ENCODE measurements at regions of chr3 and their contacts with region 1.

Region 1: DNA sequence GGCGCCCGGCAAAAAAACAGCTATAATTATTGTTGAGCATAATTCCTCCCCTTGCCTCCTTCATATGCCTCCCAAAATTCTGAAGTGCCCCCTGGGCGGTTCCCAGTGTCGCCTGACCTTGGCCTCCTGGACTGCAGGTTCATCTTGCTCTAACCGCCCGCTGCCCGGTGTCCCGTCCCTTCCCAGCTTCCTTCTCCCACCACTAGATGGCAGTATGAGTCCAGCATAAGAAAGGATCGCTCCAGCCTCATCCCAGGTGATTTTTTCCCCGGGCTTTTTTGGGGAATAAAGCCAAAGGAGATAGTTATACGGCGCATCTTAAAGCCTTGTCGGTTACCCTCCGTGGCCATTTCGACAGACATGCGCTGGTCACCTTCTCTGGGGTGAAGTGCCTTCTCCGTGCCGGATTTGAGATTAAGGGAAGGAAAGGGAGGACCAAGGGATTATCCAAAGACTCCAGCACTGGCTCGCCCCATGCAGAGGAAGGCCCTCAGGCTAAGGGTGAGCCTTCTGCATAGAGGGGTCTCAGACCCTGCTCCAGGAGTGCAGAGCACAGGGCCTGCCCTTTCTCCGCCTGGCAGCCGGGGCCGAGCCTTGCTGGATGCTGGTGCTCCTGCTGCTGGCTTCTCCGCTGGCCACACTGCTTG is 45.8 kb upstream of the TRA2B start:
- DNase-seq: peak; percentile 55
- H3K4me3 ChIP-seq: no peak overlapping the region
- H3K27ac ChIP-seq: no peak overlapping the region
- H3K4me1 ChIP-seq: peaks cover 6% of the 10 kb centered on the region
- H3K27me3 ChIP-seq: no peaks in the 10 kb centered on the region
- CTCF ChIP-seq: peak; percentile 77 to 88
- POLR2A ChIP-seq: no peak

Region 2: GRCh38 chr3:186241910-186242821 is 258.5 kb after region 1 on chr3:
- CTCF ChIA-PET with region 1: interaction called, 44 read pairs
- POLR2A ChIA-PET with region 1: no interaction called
- dilution Hi-C with region 1: no loop called
- intact Hi-C with region 1: loop called (anchors 1 kb)
- DNase-seq: peak; percentile 33
- H3K4me3 ChIP-seq: no peak overlapping the region
- H3K27ac ChIP-seq: no peak overlapping the region
- H3K4me1 ChIP-seq: no peaks in the 10 kb centered on the region
- H3K27me3 ChIP-seq: no peaks in the 10 kb centered on the region
- CTCF ChIP-seq: peak; percentile 24 to 55
- POLR2A ChIP-seq: no peak

Region 3: DNA sequence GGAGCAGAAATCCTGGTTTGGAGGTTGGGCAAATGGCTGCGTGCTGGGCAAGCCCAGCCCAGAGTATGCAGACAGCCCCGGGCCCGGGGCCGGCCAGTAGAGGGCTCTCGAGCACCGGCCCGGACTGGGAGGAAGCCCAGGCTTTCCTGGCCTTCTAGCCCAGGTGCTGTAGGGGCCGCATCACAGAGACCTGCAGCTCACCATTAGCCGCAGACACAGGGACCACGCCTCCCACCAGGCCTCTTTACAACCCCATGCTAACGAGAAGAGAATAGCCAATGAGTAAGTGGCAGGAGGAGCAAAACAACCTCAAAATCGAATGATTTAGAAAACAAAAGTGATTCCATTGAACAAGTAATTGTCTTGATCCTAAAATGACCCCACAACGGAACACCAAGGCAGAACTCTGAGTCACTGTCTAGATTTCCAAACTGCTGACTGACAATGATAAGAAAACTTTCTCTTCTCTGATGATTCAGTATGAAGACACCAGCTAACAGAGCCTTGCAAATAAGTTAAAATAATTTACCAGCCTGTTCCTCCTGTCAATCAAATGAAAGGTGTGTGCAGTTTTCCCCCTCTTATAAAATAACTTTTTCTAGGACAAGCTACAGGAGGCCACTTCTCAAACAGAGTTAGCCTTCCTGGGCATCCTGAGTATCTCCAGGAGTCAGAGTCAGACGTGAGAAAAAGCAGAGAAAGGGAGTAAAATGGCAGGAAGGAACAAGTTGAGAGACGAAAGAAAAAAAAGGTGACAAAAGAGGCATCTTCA is 276.2 kb after region 1 on chr3:
- CTCF ChIA-PET with region 1: interaction called, 22 read pairs
- POLR2A ChIA-PET with region 1: no interaction called
- dilution Hi-C with region 1: no loop called
- intact Hi-C with region 1: loop called (anchors 5 kb)
- DNase-seq: peak; percentile 58
- H3K4me3 ChIP-seq: no peak overlapping the region
- H3K27ac ChIP-seq: no peak overlapping the region
- H3K4me1 ChIP-seq: no peaks in the 10 kb centered on the region
- H3K27me3 ChIP-seq: no peaks in the 10 kb centered on the region
- CTCF ChIP-seq: peak; percentile 87 to 98
- POLR2A ChIP-seq: no peak

Region 4: GRCh38 chr3:186277268-186277909 is 293.8 kb after region 1 on chr3:
- CTCF ChIA-PET with region 1: interaction called, 89 read pairs
- POLR2A ChIA-PET with region 1: no interaction called
- dilution Hi-C with region 1: no loop called
- intact Hi-C with region 1: loop called (anchors 1 kb)
- DNase-seq: peak; percentile 49
- H3K4me3 ChIP-seq: no peak overlapping the region
- H3K27ac ChIP-seq: no peak overlapping the region
- H3K4me1 ChIP-seq: no peaks in the 10 kb centered on the region
- H3K27me3 ChIP-seq: peaks cover 0 to 3% of the 10 kb centered on the region in 2 experiments
- CTCF ChIP-seq: peak; percentile 20 to 41
- POLR2A ChIP-seq: no peak

Region 5: DNA sequence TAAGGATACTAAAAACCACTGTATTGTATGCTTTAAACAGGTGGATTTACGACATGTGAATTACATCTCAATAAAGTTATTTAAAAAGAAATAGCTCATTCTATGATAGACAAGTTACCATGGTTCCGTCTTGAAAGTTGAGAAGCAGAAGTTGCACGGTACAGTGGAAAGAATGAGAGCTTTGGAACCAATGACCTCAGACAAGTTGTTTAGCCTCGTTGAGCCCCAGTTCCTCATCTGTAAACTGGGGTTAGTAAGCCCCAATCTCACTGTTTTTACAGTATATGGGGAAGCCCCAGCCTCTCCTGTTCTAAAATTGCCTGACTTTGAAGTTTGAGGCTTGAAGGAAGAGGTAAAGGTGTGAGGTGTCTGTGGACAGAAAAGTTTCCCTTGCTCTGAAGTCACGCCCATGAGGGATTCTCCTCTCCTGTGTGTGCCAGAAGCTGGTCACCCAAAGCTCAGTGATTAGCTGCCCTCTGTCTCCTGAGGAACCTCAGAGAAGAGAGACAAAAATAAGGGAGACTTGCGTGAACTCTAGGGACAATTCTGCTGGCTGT is 550.6 kb after region 1 on chr3:
- CTCF ChIA-PET with region 1: interaction called, 187 read pairs
- POLR2A ChIA-PET with region 1: no interaction called
- dilution Hi-C with region 1: no loop called
- intact Hi-C with region 1: no loop called
- DNase-seq: no peak
- H3K4me3 ChIP-seq: no peak overlapping the region
- H3K27ac ChIP-seq: no peak overlapping the region
- H3K4me1 ChIP-seq: no peaks in the 10 kb centered on the region
- H3K27me3 ChIP-seq: no peaks in the 10 kb centered on the region
- CTCF ChIP-seq: no peak
- POLR2A ChIP-seq: no peak

Region 6: DNA sequence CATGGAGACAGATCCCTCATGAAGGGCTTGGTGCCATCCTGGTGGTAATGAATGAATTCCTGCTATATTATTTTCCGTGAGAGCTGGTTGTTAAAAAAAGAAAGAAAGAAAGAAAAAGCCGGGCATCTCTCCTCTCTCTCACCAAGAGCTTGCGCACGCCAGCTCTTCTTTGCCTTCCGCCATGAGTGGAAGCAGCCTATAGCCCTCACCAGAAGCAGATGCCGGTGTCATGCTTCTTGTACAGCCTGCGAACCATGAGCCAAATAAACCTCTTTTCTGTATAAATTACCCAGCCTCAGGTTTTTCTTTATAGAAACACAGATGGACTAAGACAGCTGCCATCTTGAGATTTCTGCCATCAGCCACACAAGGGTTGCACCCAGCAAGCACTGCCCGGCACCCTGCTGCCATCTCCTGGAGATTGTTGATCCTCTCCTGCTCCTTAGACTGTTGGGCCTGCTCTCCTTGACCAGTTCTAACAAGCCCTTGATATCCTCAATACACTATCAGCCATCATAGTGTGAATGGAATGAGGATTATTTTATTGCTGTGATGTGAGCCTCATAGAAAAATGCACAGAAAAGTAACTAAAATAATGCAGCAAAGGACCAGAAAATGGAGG is 625.7 kb after region 1 on chr3:
- CTCF ChIA-PET with region 1: interaction called, 48 read pairs
- POLR2A ChIA-PET with region 1: interaction called, 4 read pairs
- dilution Hi-C with region 1: no loop called
- intact Hi-C with region 1: no loop called
- DNase-seq: no peak
- H3K4me3 ChIP-seq: no peak overlapping the region
- H3K27ac ChIP-seq: no peak overlapping the region
- H3K4me1 ChIP-seq: peaks cover 1% of the 10 kb centered on the region
- H3K27me3 ChIP-seq: peaks cover 3 to 5% of the 10 kb centered on the region in 2 experiments
- CTCF ChIP-seq: no peak
- POLR2A ChIP-seq: no peak